ENCODE measurements at regions of chr9 and their contacts with region 1.

Region 1: GRCh38 chr9:14428781-14429230 is 114.9 kb upstream of the NFIB start:
- DNase-seq: peak in 2 of 5 donors; percentile 5 to 6
- H3K4me3 ChIP-seq: no peak overlapping the region
- H3K4me3 Mint-ChIP-seq: peak overlapping the region in 1 of 8 donors; percentile 35
- H3K27ac ChIP-seq: no peak overlapping the region
- H3K27ac Mint-ChIP-seq: no peak overlapping the region
- H3K4me1 ChIP-seq: no peaks in the 10 kb centered on the region
- H3K4me1 Mint-ChIP-seq: peaks cover 0 to 4% (median 1%) of the 10 kb centered on the region in 4 donors
- H3K27me3 ChIP-seq: no peaks in the 10 kb centered on the region
- H3K27me3 Mint-ChIP-seq: peaks cover 5 to 7% of the 10 kb centered on the region in 2 donors

Region 2: GRCh38 chr9:14062586-14063221 is 366.1 kb before region 1 on chr9:
- CTCF ChIA-PET with region 1: no interaction called
- POLR2A ChIA-PET with region 1: no interaction called
- intact Hi-C with region 1: no loop called
- DNase-seq: no peak
- H3K4me3 ChIP-seq: no peak overlapping the region
- H3K4me3 Mint-ChIP-seq: no peak overlapping the region
- H3K27ac ChIP-seq: no peak overlapping the region
- H3K27ac Mint-ChIP-seq: no peak overlapping the region
- H3K4me1 ChIP-seq: no peaks in the 10 kb centered on the region
- H3K4me1 Mint-ChIP-seq: no peaks in the 10 kb centered on the region
- H3K27me3 ChIP-seq: no peaks in the 10 kb centered on the region
- H3K27me3 Mint-ChIP-seq: no peaks in the 10 kb centered on the region

Region 3: GRCh38 chr9:14405176-14405706 is 23.6 kb before region 1 on chr9:
- CTCF ChIA-PET with region 1: no interaction called
- POLR2A ChIA-PET with region 1: no interaction called
- intact Hi-C with region 1: no loop called
- DNase-seq: no peak
- H3K4me3 ChIP-seq: no peak overlapping the region
- H3K4me3 Mint-ChIP-seq: no peak overlapping the region
- H3K27ac ChIP-seq: no peak overlapping the region
- H3K27ac Mint-ChIP-seq: no peak overlapping the region
- H3K4me1 ChIP-seq: no peaks in the 10 kb centered on the region
- H3K4me1 Mint-ChIP-seq: no peaks in the 10 kb centered on the region
- H3K27me3 ChIP-seq: no peaks in the 10 kb centered on the region
- H3K27me3 Mint-ChIP-seq: peaks cover 2 to 5% of the 10 kb centered on the region in 2 donors

Region 4: DNA sequence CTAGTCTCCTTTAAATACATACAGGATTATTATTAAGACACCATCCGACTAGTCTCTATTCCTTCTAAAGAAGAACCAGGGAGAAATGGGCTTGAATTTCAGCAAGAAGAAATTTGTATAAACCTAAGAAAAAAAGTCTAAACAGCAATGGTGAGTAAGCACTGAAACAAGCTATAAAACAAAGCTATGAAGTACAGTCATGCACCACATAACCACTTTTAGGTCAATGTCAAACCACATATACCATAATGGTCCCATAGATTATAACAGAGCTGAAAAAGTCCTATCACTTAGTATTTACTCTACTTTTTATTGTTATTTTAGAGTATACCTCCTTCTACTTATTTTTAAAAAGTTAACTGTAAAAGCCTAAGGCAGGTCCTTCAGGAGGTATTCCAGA is 12.9 kb before region 1 on chr9:
- CTCF ChIA-PET with region 1: interaction called, 14 read pairs
- POLR2A ChIA-PET with region 1: no interaction called
- intact Hi-C with region 1: no loop called
- DNase-seq: no peak
- H3K4me3 ChIP-seq: no peak overlapping the region
- H3K4me3 Mint-ChIP-seq: no peak overlapping the region
- H3K27ac ChIP-seq: no peak overlapping the region
- H3K27ac Mint-ChIP-seq: no peak overlapping the region
- H3K4me1 ChIP-seq: no peaks in the 10 kb centered on the region
- H3K4me1 Mint-ChIP-seq: no peaks in the 10 kb centered on the region
- H3K27me3 ChIP-seq: no peaks in the 10 kb centered on the region
- H3K27me3 Mint-ChIP-seq: no peaks in the 10 kb centered on the region

Region 5: GRCh38 chr9:14485366-14485765 is 56.6 kb after region 1 on chr9:
- CTCF ChIA-PET with region 1: no interaction called
- POLR2A ChIA-PET with region 1: no interaction called
- intact Hi-C with region 1: no loop called
- DNase-seq: no peak
- H3K4me3 ChIP-seq: no peak overlapping the region
- H3K4me3 Mint-ChIP-seq: no peak overlapping the region
- H3K27ac ChIP-seq: no peak overlapping the region
- H3K27ac Mint-ChIP-seq: no peak overlapping the region
- H3K4me1 ChIP-seq: no peaks in the 10 kb centered on the region
- H3K4me1 Mint-ChIP-seq: no peaks in the 10 kb centered on the region
- H3K27me3 ChIP-seq: no peaks in the 10 kb centered on the region
- H3K27me3 Mint-ChIP-seq: peaks cover 3 to 7% of the 10 kb centered on the region in 2 donors

Measured in CD4-positive, alpha-beta memory T cell (primary cell).